Activated CD4-positive, alpha-beta memory T cell treated with anti-CD3 and anti-CD28 coated beads, Interleukin-2, amount 10 ng/mL, durations not matched to agents 7 days and 5 days (primary cell): ENCODE measurements at regions of chr2 and their contacts with region 1.

Region 1: DNA sequence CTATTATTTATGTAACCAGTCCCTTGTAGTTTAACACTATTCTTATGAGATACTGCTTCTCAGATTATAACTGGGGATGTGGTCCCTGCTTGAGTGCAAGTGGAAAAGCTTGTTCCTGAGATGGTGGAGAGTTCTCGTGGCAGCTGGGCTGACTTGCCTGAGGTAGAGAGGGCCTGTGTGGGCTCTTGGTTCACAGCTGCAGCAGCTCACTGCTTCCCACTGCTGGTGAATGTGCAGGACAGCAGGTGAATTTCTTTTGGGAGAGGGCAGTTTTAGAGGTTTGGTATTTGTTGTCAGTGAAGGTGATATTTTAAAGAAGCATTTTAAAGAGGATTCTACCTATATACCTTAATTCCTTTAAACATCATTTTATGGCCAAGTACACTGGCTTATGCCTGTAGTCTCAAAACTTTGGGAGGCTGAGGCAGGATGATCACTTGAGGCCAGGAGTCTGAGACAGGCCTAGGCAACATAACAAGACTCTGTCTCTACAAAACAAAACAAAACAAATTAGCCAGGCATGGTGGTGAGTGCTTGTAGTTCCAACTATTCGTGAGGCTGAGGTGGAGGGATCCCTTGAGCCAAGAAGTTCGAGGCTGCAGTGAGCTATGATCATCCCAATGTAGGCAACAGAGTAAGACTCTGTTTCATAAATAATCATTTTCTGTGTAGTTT is 94.8 kb downstream of the MTA3 start:
- DNase-seq: peak; percentile 58
- H3K4me3 Mint-ChIP-seq: no peak overlapping the region
- H3K27ac Mint-ChIP-seq: no peak overlapping the region
- H3K4me1 Mint-ChIP-seq: no peaks in the 10 kb centered on the region
- H3K27me3 Mint-ChIP-seq: no peaks in the 10 kb centered on the region

Region 2: GRCh38 chr2:42494355-42495233 is 168.6 kb before region 1 on chr2:
- CTCF ChIA-PET with region 1: interaction called, 16 read pairs
- POLR2A ChIA-PET with region 1: no interaction called
- DNase-seq: peak; percentile 78
- H3K4me3 Mint-ChIP-seq: peak overlapping the region; percentile 78
- H3K27ac Mint-ChIP-seq: no peak overlapping the region
- H3K4me1 Mint-ChIP-seq: peaks cover 13% of the 10 kb centered on the region
- H3K27me3 Mint-ChIP-seq: peaks cover 37% of the 10 kb centered on the region

Region 3: GRCh38 chr2:42675815-42676214 is 12.6 kb after region 1 on chr2:
- CTCF ChIA-PET with region 1: interaction called, 10 read pairs
- POLR2A ChIA-PET with region 1: no interaction called
- DNase-seq: no peak
- H3K4me3 Mint-ChIP-seq: no peak overlapping the region
- H3K27ac Mint-ChIP-seq: no peak overlapping the region
- H3K4me1 Mint-ChIP-seq: no peaks in the 10 kb centered on the region
- H3K27me3 Mint-ChIP-seq: no peaks in the 10 kb centered on the region

Region 4: DNA sequence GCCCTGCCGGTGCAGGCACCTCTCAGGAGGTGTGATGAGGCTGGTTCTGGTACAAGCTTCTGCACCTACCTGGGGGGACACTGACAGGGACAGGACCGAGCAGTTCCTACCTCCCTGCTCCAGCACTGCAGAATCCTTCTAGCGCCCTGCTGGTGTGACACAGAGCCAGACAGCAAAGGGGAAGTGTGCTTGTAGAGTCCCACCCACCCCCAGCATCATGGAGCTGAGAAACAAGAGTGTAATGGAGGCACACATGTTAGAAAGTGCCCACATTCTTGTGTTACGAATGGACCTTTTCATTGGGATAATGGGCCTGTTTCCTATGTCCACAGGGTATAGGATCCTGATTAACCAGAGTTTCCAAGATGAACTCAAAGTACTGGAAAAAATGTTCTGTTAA is 62.4 kb after region 1 on chr2:
- CTCF ChIA-PET with region 1: no interaction called
- POLR2A ChIA-PET with region 1: no interaction called
- DNase-seq: no peak
- H3K4me3 Mint-ChIP-seq: no peak overlapping the region
- H3K27ac Mint-ChIP-seq: no peak overlapping the region
- H3K4me1 Mint-ChIP-seq: peaks cover 10% of the 10 kb centered on the region
- H3K27me3 Mint-ChIP-seq: no peaks in the 10 kb centered on the region